GM23248 (cell line): ENCODE measurements at regions of chr19 and their contacts with region 1.

Region 1: DNA sequence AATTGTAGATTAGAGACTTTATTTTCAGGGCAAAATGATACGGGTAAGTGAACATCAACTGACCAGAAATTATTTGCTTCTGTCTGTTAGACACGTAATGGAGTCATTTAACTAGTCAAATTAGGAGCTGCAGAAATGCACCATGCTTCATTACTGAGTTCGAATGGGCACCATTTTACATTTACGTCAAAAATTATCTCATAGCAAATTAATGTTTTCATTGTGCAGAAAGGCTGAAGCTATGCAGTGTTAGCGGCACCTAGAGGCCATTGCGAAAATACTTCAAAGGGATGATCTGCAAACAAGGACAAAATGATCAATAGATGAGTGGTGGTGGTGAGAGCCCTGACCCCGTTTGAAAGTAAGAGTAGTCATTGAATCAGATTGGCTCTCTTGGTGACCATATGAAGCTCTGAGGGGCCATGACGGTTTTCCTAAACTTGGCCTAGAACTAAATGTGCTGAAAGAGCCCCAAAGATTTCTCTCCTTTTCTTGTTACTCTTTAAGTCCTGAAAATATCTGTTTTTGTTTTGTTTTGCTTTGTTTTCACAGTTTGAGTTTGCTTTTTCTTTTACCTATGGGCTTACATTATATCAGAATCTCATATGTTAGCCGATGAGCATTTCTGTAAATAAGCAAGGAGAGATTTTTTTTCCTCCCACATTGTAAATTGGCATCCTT is 277.9 kb downstream of the ZNF536 start:
- DNase-seq: peak; percentile 70
- H3K4me3 ChIP-seq: no peak overlapping the region
- H3K27ac ChIP-seq: no peak overlapping the region
- H3K4me1 ChIP-seq: no peaks in the 10 kb centered on the region
- H3K27me3 ChIP-seq: peaks cover under 1% of the 10 kb centered on the region; the same call in 1 of the 2 replicates

Region 2: DNA sequence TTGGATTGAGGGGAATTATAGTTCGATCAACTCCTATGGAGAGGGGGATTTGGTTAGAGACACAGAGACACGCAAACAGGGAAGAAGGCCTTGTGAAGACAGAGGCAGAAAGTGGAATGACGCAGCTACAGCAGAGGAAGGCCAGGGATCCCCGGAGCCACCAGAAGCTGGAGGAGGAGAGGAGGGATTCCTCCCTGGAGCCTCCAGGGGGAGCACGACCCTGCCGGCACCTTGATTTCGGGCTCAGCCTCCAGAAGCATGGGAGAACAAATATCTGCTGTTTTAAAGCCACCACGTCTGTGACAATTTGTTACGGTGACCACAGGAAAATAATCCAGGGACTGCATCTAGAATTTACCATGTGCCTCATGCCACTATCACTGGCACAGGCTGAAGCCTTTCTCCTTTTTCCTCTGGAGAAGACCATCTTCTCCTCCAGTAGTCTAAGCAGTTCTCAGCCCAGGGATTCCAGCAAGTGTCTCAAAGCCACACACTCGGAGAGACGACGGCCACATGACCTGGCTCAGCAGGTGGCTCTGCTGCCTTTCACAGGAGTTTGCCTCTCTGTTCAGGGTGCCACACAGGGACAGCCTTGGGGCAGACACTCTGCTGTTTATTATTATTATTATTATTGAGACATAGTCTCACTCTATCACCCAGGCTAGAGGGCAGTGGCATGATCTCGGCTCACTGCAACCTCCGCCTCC is 878.2 kb before region 1 on chr19:
- in situ Hi-C with region 1: loop called (anchors 25 kb)
- DNase-seq: peak; percentile 81
- H3K4me3 ChIP-seq: no peak overlapping the region
- H3K27ac ChIP-seq: no peak overlapping the region
- H3K4me1 ChIP-seq: no peaks in the 10 kb centered on the region
- H3K27me3 ChIP-seq: no peaks in the 10 kb centered on the region

Region 3: GRCh38 chr19:29878973-29879654 is 771.0 kb before region 1 on chr19:
- in situ Hi-C with region 1: loop called (anchors 25 kb)
- DNase-seq: peak; percentile 84
- H3K4me3 ChIP-seq: peak overlapping the region; percentile 57
- H3K27ac ChIP-seq: no peak overlapping the region
- H3K4me1 ChIP-seq: peaks cover 8% of the 10 kb centered on the region
- H3K27me3 ChIP-seq: no peaks in the 10 kb centered on the region

Region 4: DNA sequence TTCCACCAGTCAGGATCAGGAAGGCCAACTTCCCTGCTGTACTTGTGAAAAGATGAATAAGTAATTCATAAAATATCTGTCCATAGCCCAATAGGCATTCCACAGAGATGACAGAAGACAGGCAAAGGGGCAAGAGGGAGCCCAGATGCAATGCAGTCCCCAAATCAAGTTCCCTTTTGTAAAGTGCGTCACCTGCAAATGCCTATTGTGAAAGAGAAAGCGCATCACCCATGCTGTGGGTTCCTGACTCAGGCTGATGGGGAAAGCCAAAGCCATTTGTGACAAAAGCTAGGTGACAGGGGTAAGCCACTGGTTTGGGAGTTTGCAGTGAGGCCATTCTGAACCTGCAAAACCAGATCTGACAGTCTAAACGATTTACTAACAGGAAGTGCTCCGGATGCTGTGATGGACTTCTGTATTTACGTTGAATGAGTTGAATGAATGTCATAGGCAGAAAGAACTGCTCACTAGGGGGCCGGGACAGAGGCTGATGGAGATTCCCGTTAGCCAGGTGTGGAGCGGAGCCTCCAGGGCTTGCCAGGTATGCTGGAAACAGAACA is 435.3 kb before region 1 on chr19:
- in situ Hi-C with region 1: loop called (anchors 10 kb)
- DNase-seq: peak; percentile 23
- H3K4me3 ChIP-seq: no peak overlapping the region
- H3K27ac ChIP-seq: no peak overlapping the region
- H3K4me1 ChIP-seq: no peaks in the 10 kb centered on the region
- H3K27me3 ChIP-seq: peaks cover 5% of the 10 kb centered on the region; the same call in 1 of the 2 replicates

Region 5: DNA sequence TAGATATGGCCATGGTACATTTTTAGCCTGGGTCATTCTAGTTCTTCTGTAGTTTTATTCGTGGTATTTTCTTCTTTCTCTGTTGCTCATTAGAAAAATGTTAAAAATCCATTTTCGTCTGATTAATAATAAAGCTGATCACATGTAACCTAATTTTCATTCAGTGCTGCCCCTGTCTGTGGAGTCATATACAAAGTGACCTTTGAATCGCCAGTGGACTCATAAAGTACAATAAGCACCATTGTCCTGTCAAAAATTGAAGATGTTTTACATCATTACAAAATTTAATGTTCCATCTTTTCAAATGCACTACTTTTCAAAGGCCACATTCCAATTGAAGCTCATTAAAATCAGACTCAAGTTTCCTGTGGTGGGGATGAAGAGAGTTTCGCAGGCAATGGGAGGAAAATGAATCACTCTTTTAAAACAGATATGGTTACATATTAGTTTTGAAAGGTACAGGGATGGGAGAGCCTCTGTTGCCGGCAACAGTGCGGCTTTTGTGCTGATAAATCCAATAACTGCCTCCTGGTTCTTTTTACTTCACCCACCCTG is 72.4 kb before region 1 on chr19:
- in situ Hi-C with region 1: no loop called
- DNase-seq: no peak
- H3K4me3 ChIP-seq: no peak overlapping the region
- H3K27ac ChIP-seq: no peak overlapping the region
- H3K4me1 ChIP-seq: no peaks in the 10 kb centered on the region
- H3K27me3 ChIP-seq: no peaks in the 10 kb centered on the region